Mammary epithelial cell (primary cell): ENCODE measurements at regions of chr2 and their contacts with region 1.

Region 1: GRCh38 chr2:236769921-236770671 is 200.5 kb downstream of the ACKR3 start:
- DNase-seq: peak; percentile 99
- H3K4me3 ChIP-seq: no peak overlapping the region
- H3K27ac ChIP-seq: peak overlapping the region; percentile 78
- H3K4me1 ChIP-seq: peaks cover 34% of the 10 kb centered on the region
- H3K27me3 ChIP-seq: no peaks in the 10 kb centered on the region
- CTCF ChIP-seq: no peak

Region 2: GRCh38 chr2:236569573-236569973 is 200.5 kb before region 1 on chr2 and contains the start of gene ACKR3:
- CTCF ChIA-PET with region 1: no interaction called
- dilution Hi-C with region 1: no loop called
- in situ Hi-C with region 1: no loop called
- intact Hi-C with region 1: loop called (anchors 5 kb)
- DNase-seq: peak; percentile 75
- H3K4me3 ChIP-seq: peak within 1 kb of the TSS; percentile 25 to 44 (median 34)
- H3K27ac ChIP-seq: no peak within 1 kb of the TSS
- H3K4me1 ChIP-seq: no peaks in the 10 kb centered on the region
- H3K27me3 ChIP-seq: no peaks in the 10 kb centered on the region
- CTCF ChIP-seq: peak; percentile 44 to 62
- total RNA-seq, gene ACKR3: 1.8 to 79.0 TPM

Region 3: DNA sequence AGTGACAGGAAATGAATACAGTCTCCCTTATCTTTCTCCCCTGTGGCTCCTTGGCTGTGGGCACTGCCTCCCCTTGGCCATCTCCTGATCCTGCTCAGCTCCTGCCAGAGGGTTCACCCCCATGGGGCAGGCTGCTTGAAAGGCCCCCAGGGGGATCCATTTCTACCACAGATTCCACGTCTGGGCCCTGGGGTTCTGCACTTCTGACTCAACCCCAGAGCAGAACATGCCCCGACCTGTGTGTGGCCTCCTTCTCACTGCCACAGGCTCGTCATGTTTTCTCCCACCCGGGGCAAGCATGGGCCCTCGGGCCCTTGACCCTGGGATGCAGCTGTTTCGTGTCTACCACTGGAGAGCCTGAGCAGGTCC is 78.3 kb before region 1 on chr2:
- CTCF ChIA-PET with region 1: no interaction called
- dilution Hi-C with region 1: no loop called
- in situ Hi-C with region 1: no loop called
- intact Hi-C with region 1: loop called (anchors 1 kb)
- DNase-seq: peak; percentile 87
- H3K4me3 ChIP-seq: no peak overlapping the region
- H3K27ac ChIP-seq: peak overlapping the region; percentile 73
- H3K4me1 ChIP-seq: peaks cover 48% of the 10 kb centered on the region
- H3K27me3 ChIP-seq: no peaks in the 10 kb centered on the region
- CTCF ChIP-seq: no peak

Region 4: DNA sequence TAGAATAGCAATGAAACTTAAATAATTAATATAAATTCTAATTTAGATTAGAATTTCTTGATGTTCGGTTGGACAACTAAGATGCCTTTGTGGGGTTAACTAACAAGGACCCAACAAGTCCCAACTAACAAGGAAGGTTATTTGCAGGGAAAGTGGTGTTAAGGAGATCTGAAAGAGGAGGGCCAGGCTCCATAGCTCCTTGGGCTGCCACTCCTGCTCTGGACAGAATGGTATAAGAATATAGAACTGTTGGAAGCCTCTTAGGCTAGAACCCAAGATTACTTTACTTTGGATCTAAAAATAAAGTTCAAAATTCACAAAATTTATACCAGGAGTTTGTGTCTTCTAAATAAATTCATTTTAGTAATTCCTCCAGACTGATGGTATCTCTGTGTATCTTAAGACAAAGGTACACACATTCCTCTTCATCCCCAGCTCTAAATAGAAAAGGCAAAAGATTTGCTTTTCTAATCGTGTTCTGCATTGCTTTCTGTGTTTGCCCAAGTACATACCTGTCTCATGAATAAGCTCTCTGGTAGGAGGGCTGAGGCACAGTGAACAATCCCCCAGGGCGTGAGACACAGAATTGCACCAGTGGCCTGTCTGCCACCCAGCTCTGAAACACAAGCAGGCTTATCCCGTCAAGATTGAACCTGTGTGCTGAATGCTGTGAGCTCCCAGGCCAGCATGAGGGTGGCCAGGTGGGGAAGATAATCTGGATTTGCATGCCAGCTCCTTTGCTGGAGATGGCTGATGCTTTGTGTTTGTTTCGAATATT is 24.5 kb before region 1 on chr2:
- CTCF ChIA-PET with region 1: no interaction called
- dilution Hi-C with region 1: no loop called
- in situ Hi-C with region 1: no loop called
- intact Hi-C with region 1: loop called (anchors 1 kb)
- DNase-seq: peak; percentile 94
- H3K4me3 ChIP-seq: no peak overlapping the region
- H3K27ac ChIP-seq: peak overlapping the region; percentile 86
- H3K4me1 ChIP-seq: peaks cover 68% of the 10 kb centered on the region
- H3K27me3 ChIP-seq: no peaks in the 10 kb centered on the region
- CTCF ChIP-seq: peak in 1 of 2 donors; percentile 22

Region 5: DNA sequence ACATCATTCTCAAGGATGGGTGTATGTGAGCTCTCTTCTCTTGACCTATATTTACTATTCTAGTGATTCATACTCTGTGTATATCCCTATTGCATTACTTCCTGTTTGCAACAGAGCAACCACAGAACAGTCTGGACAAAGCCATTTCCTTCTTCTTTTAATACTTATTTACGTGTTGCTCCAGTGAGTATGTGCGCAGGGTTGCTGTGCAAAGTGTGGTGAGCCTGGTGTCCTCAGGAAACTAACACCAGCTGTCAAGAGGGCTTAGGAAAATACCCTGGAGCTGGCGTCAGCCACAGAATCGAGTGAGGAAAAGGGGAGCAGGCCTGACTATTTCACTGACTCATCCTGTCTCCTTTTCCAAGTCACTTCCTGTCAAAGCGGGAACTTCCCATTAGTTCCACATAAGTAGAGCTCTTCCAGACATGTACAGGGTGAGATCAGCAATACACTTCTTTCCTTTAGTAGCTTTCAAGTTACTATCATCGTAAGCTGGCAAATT is 101.5 kb after region 1 on chr2:
- CTCF ChIA-PET with region 1: no interaction called
- dilution Hi-C with region 1: no loop called
- in situ Hi-C with region 1: no loop called
- intact Hi-C with region 1: loop called (anchors 2 kb)
- DNase-seq: peak; percentile 92
- H3K4me3 ChIP-seq: no peak overlapping the region
- H3K27ac ChIP-seq: peak overlapping the region; percentile 79
- H3K4me1 ChIP-seq: peaks cover 47% of the 10 kb centered on the region
- H3K27me3 ChIP-seq: no peaks in the 10 kb centered on the region
- CTCF ChIP-seq: no peak